ENCODE measurements at regions of chr1 and their contacts with region 1.

Region 1: GRCh38 chr1:41812051-41812450 is 106.7 kb downstream of the HIVEP3 start:
- DNase-seq: peak; percentile 63 to 73
- H3K4me3 ChIP-seq: no peak overlapping the region
- H3K27ac ChIP-seq: no peak overlapping the region
- H3K4me1 ChIP-seq: peaks cover 12% of the 10 kb centered on the region; the same call in 1 of the 2 replicates
- H3K27me3 ChIP-seq: no peaks in the 10 kb centered on the region
- CTCF ChIP-seq: peak; percentile 88

Region 2: DNA sequence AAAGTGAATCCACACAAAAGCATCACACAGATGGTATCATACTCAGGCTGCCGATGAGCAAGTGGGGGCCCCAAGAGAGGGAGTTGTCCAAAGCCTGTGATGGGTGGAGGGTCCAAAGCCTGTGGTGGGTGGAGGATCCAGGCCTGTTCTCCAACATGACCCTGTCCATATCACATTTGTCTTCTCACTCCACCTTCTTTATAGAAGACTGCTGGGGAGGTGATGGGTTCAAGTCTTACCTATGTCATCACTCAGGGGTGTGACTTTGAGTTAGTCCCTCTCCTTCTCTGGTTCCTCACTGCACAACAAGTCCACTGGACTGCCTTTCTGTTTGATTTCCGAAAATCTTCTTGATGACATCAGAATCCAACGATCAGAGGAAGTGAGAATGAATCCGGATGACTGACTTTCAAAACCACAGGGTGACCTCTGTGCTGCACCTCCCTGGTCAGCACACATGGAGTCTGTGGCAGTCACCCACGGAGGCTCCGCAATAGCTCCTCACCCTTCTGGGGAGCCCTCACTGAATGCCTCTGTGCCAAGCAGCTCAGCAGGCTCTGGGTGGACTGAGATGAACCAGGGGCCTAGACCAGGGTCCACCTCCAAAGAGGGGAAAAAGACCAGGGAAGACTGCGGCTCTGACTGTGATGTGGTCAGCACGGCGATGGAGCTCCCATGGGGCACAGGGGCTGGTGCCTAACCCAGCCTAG is 60.1 kb before region 1 on chr1:
- CTCF ChIA-PET with region 1: no interaction called
- POLR2A ChIA-PET with region 1: no interaction called
- intact Hi-C with region 1: loop called (anchors 10 kb)
- DNase-seq: no peak
- H3K4me3 ChIP-seq: no peak overlapping the region
- H3K27ac ChIP-seq: no peak overlapping the region
- H3K4me1 ChIP-seq: no peaks in the 10 kb centered on the region
- H3K27me3 ChIP-seq: no peaks in the 10 kb centered on the region
- CTCF ChIP-seq: no peak

Region 3: GRCh38 chr1:41891199-41891896 is 79.3 kb after region 1 on chr1:
- CTCF ChIA-PET with region 1: no interaction called
- POLR2A ChIA-PET with region 1: interaction called, 4 read pairs
- intact Hi-C with region 1: loop called (anchors 1 kb)
- DNase-seq: peak in 1 of 2 experiments; percentile 47
- H3K4me3 ChIP-seq: no peak overlapping the region
- H3K27ac ChIP-seq: peak overlapping the region; percentile 40
- H3K4me1 ChIP-seq: peaks cover 35% of the 10 kb centered on the region
- H3K27me3 ChIP-seq: no peaks in the 10 kb centered on the region
- CTCF ChIP-seq: no peak

Region 4: DNA sequence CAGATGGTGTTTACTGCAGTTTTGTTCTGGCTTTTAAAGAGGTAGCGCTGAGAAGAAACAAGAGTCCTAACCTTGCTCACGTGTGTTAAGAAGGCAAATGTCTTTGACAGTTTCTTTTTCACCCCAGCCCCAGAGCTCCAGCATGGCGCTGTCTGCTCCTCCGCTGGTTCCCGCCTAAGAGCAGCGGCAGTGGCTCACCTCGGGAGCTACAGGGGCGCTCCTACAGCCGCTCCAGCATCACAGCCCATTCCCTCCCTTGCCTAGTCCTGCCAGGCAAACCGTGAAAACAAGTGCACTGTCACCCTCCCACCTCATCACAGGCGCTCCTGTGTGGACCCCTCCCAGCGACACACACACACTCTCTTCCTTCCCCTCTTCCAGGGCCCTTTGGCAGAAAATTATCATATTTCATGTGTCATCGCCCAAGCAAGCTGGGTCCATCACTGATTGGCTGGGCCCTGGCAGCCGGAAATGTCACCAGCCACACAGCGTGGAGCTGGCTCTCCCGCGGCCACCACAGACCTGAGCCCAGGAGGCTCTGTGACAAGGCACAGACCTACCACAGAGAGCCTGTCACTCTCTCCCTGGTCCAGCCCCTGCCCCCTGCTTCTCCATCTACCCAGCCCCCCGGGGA is 107.8 kb after region 1 on chr1:
- CTCF ChIA-PET with region 1: interaction called, 8 read pairs
- POLR2A ChIA-PET with region 1: no interaction called
- intact Hi-C with region 1: loop called (anchors 2 kb)
- DNase-seq: peak; percentile 83
- H3K4me3 ChIP-seq: peak overlapping the region; percentile 87
- H3K27ac ChIP-seq: peak overlapping the region; percentile 75
- H3K4me1 ChIP-seq: peaks cover 57% of the 10 kb centered on the region
- H3K27me3 ChIP-seq: no peaks in the 10 kb centered on the region
- CTCF ChIP-seq: no peak

Region 5: DNA sequence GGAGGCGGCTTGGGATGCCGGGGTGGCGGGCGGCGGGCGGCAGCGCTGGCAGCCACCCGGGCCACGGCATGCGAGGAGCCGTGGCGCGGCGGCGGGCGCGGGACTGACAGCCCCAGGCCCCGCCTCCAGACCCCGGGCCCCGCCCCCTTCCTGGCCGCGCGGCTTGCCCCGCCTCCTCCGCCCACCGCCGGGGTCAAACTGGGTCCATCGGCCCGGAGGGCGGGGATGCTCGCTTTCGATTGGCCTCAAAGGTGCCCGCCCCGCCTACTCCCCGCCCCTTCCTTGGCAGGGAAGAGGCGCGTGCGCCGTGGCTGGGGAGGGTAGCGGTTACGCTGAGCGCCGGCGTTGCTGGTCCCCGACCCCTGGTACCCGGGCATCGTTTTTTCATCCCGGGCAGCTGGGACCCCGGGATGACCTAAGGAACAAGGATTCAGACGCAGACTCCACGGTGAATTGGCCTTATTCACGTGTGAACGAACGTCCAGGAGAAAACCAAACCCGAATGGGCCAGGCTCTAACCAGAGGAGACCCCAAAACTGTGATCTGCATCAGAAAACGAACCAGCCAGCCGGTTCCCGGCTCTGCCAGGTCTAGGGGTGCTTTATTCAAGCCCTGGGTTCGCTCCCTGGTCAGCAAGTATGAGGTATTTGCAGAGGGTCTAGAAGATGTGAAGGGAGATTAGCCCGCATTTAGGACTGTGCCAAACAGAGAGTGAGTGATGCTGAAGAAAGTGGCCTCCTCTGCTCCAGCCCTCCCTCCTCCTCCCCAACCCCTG is 224.0 kb after region 1 on chr1:
- CTCF ChIA-PET with region 1: interaction called, 4 read pairs
- POLR2A ChIA-PET with region 1: no interaction called
- intact Hi-C with region 1: loop called (anchors 1 kb)
- DNase-seq: peak; percentile 78 to 99
- H3K4me3 ChIP-seq: peak overlapping the region; percentile 86
- H3K27ac ChIP-seq: no peak overlapping the region
- H3K4me1 ChIP-seq: peaks cover 18% of the 10 kb centered on the region
- H3K27me3 ChIP-seq: no peaks in the 10 kb centered on the region
- CTCF ChIP-seq: no peak

Measured in PC-9 (cell line).